Spleen (tissue), 13 donors: ENCODE measurements at regions of chr14 and their contacts with region 1.

Region 1: DNA sequence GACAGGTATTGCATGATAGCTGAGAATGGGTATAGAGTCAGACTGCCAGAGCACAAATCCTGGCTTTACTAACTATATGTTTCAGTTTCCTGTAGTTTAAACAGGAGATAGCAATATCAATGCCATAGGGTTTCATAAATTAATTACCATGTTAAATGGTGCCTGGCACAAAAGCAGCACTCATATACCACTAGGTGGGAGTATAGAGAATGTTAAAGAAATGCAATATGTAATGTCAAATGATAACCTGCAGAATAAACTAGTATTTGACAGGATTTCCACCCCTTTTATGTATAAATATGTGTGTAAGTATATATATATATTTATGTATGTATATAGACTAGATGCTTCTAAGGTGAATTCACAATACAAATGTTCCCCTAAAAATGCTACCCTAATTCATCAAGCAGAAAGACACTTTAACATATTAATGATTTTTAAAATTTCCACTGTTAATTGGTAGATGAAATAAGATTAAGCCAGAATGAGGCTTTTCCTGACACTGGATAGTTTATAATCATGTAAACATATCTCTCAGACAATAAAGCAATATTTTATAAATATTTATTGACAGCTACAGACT is 8.6 kb downstream of the WDR89 start:
- DNase-seq: no peak
- H3K4me3 ChIP-seq: no peak overlapping the region
- H3K27ac ChIP-seq: no peak overlapping the region
- H3K4me1 ChIP-seq: peaks cover 0 to 37% (median 12%) of the 10 kb centered on the region in 6 donors
- H3K27me3 ChIP-seq: no peaks in the 10 kb centered on the region
- CTCF ChIP-seq: peak in 10 of 11 experiments; percentile 31 to 73 (median 56)
- POLR2A ChIP-seq: no peak

Region 2: DNA sequence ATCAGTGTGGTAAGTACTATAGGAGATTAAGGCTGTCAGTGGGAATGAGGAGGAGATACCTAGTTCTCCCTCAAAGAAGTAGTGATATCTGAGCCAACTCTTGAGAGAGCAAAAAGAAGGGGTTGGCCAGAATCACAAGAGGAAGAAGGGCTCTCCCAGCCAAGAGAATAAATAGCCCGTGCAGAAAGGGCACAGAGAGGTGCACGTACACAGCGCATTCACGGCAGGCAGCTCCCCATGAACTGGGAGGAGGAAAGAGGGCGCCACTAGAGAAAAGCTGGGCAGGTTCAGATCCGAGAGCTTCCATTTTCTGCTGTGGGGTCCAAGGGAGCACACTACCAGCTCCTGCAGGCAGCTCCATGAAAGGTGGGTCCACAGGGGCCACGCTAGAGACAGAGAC is 149.7 kb before region 1 on chr14:
- intact Hi-C with region 1: no loop called
- DNase-seq: no peak
- H3K4me3 ChIP-seq: no peak overlapping the region
- H3K27ac ChIP-seq: peak overlapping the region in 3 of 8 donors; percentile 13 to 16 (median 13)
- H3K4me1 ChIP-seq: peaks cover 10 to 81% (median 49%) of the 10 kb centered on the region in 6 donors
- H3K27me3 ChIP-seq: no peaks in the 10 kb centered on the region
- CTCF ChIP-seq: no peak
- POLR2A ChIP-seq: no peak

Region 3: DNA sequence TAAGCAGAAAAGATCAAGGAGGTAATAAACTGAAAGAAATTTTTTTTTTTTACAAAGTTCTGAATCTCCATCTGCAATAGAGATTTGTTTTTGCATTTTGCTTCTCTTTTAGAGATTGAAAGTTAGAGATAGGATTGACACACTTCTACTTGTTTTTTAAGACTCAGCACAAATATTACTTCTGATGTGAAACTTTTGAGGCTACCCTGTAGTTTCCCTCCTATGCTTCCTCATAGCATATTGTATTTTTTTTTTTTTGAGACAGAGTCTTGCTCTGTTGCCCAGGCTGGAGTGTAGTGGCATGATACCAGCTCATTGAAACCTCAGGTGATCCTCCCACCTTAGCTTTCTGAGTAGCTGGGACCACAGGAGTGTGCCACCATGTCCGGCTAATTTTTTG is 127.0 kb after region 1 on chr14:
- intact Hi-C with region 1: loop called (anchors 10 kb)
- DNase-seq: no peak
- H3K4me3 ChIP-seq: no peak overlapping the region
- H3K27ac ChIP-seq: peak overlapping the region; percentile 11 to 85 (median 76)
- H3K4me1 ChIP-seq: peaks cover 0 to 33% (median 17%) of the 10 kb centered on the region in 6 donors
- H3K27me3 ChIP-seq: no peaks in the 10 kb centered on the region
- CTCF ChIP-seq: no peak
- POLR2A ChIP-seq: no peak

Region 4: GRCh38 chr14:63896278-63896720 is 263.3 kb after region 1 on chr14:
- intact Hi-C with region 1: no loop called
- DNase-seq: no peak
- H3K4me3 ChIP-seq: no peak overlapping the region
- H3K27ac ChIP-seq: peak overlapping the region in 7 of 8 donors; percentile 63 to 88 (median 79)
- H3K4me1 ChIP-seq: peaks cover 32 to 96% (median 62%) of the 10 kb centered on the region in 6 donors
- H3K27me3 ChIP-seq: peaks cover 0 to 3% (median 0%) of the 10 kb centered on the region in 7 donors
- CTCF ChIP-seq: no peak
- POLR2A ChIP-seq: no peak